Natural killer cell (primary cell): ENCODE measurements at regions of chr3 and their contacts with region 1.

Region 1: DNA sequence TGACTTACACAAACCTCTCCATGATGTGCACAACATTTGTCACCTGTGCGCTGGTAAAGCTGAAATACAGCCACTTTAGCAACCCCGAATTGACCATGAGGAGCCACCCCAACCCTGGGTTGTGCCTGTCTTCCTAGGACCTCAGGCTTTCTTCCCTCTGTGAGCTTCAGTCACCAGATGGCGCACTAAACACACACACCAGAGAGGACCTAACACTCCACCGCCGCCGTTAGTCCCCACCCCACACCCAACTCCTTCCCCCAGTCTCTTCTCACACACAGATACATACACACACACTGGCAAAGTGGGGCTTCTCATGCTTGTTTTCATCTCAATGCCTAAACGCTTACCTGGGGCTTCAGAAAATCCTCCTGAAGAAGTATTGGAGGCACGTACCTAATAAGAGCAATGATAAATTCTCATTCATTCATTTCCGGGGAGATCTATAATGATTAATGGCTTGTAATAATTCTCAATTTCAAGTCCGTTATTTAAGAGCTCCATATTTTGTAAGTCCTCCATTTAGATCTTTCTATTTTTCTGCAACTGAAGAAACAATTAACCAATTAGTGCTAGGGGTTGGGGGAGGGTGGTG is 2.1 kb upstream of the CCDC80 start:
- DNase-seq: peak; percentile 73 to 90
- ATAC-seq: peak; percentile 93 to 97 (median 94)
- H3K4me3 ChIP-seq: peak overlapping the region; percentile 16
- H3K4me3 Mint-ChIP-seq: peak overlapping the region; percentile 86
- H3K27ac ChIP-seq: no peak overlapping the region
- H3K27ac Mint-ChIP-seq: peak overlapping the region; percentile 64 to 83
- H3K4me1 ChIP-seq: peaks cover 18% of the 10 kb centered on the region
- H3K4me1 Mint-ChIP-seq: peaks cover 17 to 23% of the 10 kb centered on the region in 2 donors
- H3K27me3 ChIP-seq: peaks cover 11% of the 10 kb centered on the region
- H3K27me3 Mint-ChIP-seq: peaks cover 8 to 9% of the 10 kb centered on the region in 2 donors
- CTCF ChIP-seq: peak; percentile 75

Region 2: GRCh38 chr3:112585782-112586181 is 57.2 kb before region 1 on chr3:
- intact Hi-C with region 1: no loop called
- DNase-seq: no peak
- ATAC-seq: no peak
- H3K4me3 ChIP-seq: no peak overlapping the region
- H3K4me3 Mint-ChIP-seq: no peak overlapping the region
- H3K27ac ChIP-seq: no peak overlapping the region
- H3K27ac Mint-ChIP-seq: no peak overlapping the region
- H3K4me1 ChIP-seq: no peaks in the 10 kb centered on the region
- H3K4me1 Mint-ChIP-seq: peaks cover 0 to 4% of the 10 kb centered on the region in 2 donors
- H3K27me3 ChIP-seq: no peaks in the 10 kb centered on the region
- H3K27me3 Mint-ChIP-seq: no peaks in the 10 kb centered on the region
- CTCF ChIP-seq: no peak

Region 3: GRCh38 chr3:112676659-112677234 is 33.7 kb after region 1 on chr3:
- intact Hi-C with region 1: loop called (anchors 1 kb)
- DNase-seq: peak; percentile 69 to 73
- ATAC-seq: peak; percentile 60 to 83 (median 82)
- H3K4me3 ChIP-seq: no peak overlapping the region
- H3K4me3 Mint-ChIP-seq: peak overlapping the region; percentile 43
- H3K27ac ChIP-seq: peak overlapping the region; percentile 17
- H3K27ac Mint-ChIP-seq: peak overlapping the region; percentile 70 to 87
- H3K4me1 ChIP-seq: peaks cover 37% of the 10 kb centered on the region
- H3K4me1 Mint-ChIP-seq: peaks cover 56 to 65% of the 10 kb centered on the region in 2 donors
- H3K27me3 ChIP-seq: no peaks in the 10 kb centered on the region
- H3K27me3 Mint-ChIP-seq: no peaks in the 10 kb centered on the region
- CTCF ChIP-seq: no peak

Region 4: GRCh38 chr3:112734718-112735350 is 91.8 kb after region 1 on chr3:
- intact Hi-C with region 1: loop called (anchors 2 kb)
- DNase-seq: peak; percentile 38 to 86
- ATAC-seq: peak; percentile 74 to 77 (median 75)
- H3K4me3 ChIP-seq: no peak overlapping the region
- H3K4me3 Mint-ChIP-seq: no peak overlapping the region
- H3K27ac ChIP-seq: no peak overlapping the region
- H3K27ac Mint-ChIP-seq: peak overlapping the region in 1 of 2 donors; percentile 51
- H3K4me1 ChIP-seq: peaks cover 8% of the 10 kb centered on the region
- H3K4me1 Mint-ChIP-seq: peaks cover 0 to 9% of the 10 kb centered on the region in 2 donors
- H3K27me3 ChIP-seq: no peaks in the 10 kb centered on the region
- H3K27me3 Mint-ChIP-seq: no peaks in the 10 kb centered on the region
- CTCF ChIP-seq: peak; percentile 71

Region 5: DNA sequence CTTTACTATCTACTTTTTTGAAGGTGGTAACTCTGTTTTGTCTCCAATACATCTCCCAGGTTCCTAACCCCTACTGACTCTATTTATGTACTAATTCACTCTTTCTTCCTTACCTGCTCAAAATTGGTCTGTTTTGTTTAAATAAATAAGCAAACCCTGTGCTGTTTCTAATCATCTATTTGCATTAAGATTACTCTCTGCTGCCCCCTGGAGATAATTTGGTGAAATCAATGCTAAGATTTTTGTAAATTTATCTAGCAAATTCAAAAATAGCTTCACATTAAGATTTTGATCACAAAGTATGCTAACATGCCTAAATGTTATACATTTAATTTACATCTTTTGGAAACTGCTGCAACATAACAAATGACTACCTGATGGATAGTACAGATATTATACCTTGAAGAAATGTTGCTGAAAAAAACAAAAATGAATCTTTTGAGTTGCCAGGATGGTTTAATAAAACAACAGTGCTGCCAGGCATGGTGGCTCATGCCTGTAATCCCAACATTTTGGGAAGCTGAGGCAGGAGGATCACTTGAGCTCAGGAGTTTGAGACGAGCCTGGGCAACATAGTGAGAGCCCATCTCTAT is 336.3 kb after region 1 on chr3:
- intact Hi-C with region 1: loop called (anchors 1 kb)
- DNase-seq: peak in 1 of 2 donors; percentile 79
- ATAC-seq: peak in 2 of 3 donors; percentile 46 to 52
- H3K4me3 ChIP-seq: no peak overlapping the region
- H3K4me3 Mint-ChIP-seq: no peak overlapping the region
- H3K27ac ChIP-seq: no peak overlapping the region
- H3K27ac Mint-ChIP-seq: no peak overlapping the region
- H3K4me1 ChIP-seq: peaks cover 7% of the 10 kb centered on the region
- H3K4me1 Mint-ChIP-seq: peaks cover 4 to 17% of the 10 kb centered on the region in 2 donors
- H3K27me3 ChIP-seq: no peaks in the 10 kb centered on the region
- H3K27me3 Mint-ChIP-seq: no peaks in the 10 kb centered on the region
- CTCF ChIP-seq: peak; percentile 85

Region 6: DNA sequence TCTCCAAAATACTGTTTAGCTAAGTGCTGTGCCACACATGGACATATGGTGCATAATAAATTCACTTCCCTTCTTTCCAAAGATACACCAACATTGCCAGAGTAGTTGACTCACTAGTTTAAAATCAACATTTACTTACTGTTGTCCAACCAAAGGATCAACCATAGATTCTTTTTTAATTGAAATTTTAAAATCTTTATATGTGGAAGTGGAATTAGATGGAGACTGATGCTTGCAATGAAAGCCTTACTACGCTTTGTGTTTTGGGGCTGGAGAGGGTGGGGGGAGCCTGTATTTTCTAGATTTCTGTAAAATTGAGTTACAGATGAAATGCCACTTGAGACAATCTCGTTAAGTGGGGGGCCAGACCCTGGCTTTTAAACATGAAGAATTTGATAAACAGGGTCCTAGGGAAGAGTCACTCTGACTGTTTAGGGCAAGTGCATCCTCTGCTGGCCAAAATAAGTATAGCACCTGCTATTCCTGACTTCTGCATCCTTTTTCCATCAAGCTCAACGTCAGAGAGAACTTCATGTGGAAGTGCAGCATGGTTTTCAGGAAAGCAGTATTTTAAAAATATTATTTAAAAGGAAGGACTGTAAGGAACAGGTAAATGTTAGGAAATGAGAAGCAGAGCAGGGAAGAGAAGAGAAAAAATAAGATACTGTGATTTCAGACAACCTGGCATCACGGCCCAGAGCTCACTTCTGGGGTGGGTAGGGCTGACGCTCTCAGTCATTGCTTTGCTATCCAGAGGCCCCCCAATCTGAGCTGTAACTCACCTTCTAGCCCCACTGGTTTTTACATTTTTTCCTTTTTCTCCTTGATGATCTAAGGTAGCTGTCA is 645.0 kb after region 1 on chr3:
- intact Hi-C with region 1: loop called (anchors 1 kb)
- DNase-seq: peak in 1 of 2 donors; percentile 74
- ATAC-seq: peak in 2 of 3 donors; percentile 71 to 76
- H3K4me3 ChIP-seq: no peak overlapping the region
- H3K4me3 Mint-ChIP-seq: no peak overlapping the region
- H3K27ac ChIP-seq: no peak overlapping the region
- H3K27ac Mint-ChIP-seq: no peak overlapping the region
- H3K4me1 ChIP-seq: no peaks in the 10 kb centered on the region
- H3K4me1 Mint-ChIP-seq: no peaks in the 10 kb centered on the region
- H3K27me3 ChIP-seq: no peaks in the 10 kb centered on the region
- H3K27me3 Mint-ChIP-seq: no peaks in the 10 kb centered on the region
- CTCF ChIP-seq: peak; percentile 99